ENCODE measurements at regions of chr18 and their contacts with region 1.

Region 1: GRCh38 chr18:47150029-47150823 is at the start of gene HDHD2:
- H3K4me3 ChIP-seq: peak within 1 kb of the TSS; percentile 75
- H3K27ac ChIP-seq: peak within 1 kb of the TSS; percentile 62
- H3K4me1 ChIP-seq: peaks cover 9% of the 10 kb centered on the region
- CTCF ChIP-seq: peak; percentile 66

Region 2: DNA sequence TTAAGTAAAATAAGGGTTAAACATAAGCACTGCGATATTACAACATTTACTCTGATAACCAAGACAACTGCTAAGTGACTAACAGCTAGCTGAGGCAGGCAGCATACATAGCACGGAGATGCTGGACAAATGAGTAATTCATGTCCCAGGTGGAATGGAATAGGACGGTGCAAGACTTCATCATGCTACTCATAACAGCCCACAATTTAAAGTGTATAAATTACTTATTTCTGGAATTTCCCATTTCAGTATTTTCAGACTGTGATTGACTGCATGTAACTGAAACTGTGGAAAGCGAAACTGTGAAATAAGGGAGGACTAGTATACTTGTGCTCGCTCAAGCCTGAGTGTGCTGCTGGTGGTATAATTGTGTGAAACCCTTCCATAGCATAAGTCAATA is 13.0 kb after region 1 on chr18:
- CTCF ChIA-PET with region 1: interaction called, 6 read pairs
- POLR2A ChIA-PET with region 1: interaction called, 13 read pairs
- H3K4me3 ChIP-seq: no peak overlapping the region
- H3K27ac ChIP-seq: no peak overlapping the region
- H3K4me1 ChIP-seq: peaks cover 11% of the 10 kb centered on the region
- CTCF ChIP-seq: no peak

Region 3: DNA sequence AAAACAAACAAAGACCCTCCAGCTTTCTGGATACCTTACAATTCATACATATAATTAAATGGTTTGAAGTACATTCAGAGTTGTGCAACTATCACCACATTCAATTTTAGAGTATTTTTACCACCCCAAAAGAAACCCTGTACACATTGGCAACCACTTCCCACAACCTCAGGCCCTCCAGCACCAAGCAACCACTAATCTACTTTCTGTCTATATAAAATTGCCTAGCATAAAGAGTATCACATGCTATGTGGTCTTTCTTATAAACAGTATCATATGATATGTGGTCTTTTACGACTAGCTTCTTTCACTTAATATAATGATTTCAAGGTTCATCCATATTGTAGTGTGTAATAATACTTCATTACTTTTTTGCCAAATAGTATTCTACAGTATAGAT is 18.7 kb after region 1 on chr18:
- CTCF ChIA-PET with region 1: interaction called, 6 read pairs
- POLR2A ChIA-PET with region 1: interaction called, 13 read pairs
- H3K4me3 ChIP-seq: no peak overlapping the region
- H3K27ac ChIP-seq: no peak overlapping the region
- H3K4me1 ChIP-seq: peaks cover 10% of the 10 kb centered on the region
- CTCF ChIP-seq: no peak

Region 4: GRCh38 chr18:47175283-47175907 is 25.2 kb after region 1 on chr18:
- CTCF ChIA-PET with region 1: interaction called, 3 read pairs
- POLR2A ChIA-PET with region 1: interaction called, 14 read pairs
- H3K4me3 ChIP-seq: peak overlapping the region; percentile 90
- H3K27ac ChIP-seq: peak overlapping the region; percentile 91
- H3K4me1 ChIP-seq: peaks cover 12% of the 10 kb centered on the region
- CTCF ChIP-seq: no peak